ENCODE measurements at regions of chr6 and their contacts with region 1.

Region 1: DNA sequence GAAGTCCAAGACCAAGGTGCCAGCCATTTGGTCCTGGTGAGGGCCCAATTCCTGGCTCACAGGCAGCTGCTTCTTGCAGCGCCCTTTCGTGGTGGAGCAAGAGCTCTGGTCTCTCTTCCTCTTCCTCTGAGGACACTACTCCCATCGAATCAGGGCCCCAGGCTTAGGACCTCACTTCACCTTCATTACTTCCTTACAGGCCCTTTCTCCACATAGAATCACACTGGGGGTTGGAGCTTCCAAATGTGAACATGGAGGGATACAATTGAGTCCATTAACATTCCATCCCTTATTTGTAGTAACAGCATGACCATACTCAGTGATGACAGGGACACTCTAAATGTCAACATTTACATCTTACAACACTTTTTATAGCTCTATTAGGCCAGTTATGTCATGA is 2.3 kb downstream of the RAMACL start:
- DNase-seq: no peak
- ATAC-seq: no peak
- H3K4me3 ChIP-seq: no peak overlapping the region
- H3K27ac ChIP-seq: no peak overlapping the region
- H3K4me1 ChIP-seq: no peaks in the 10 kb centered on the region
- H3K27me3 ChIP-seq: peaks cover 6 to 28% of the 10 kb centered on the region in 2 experiments; a peak in 2 of 5 replicates
- CTCF ChIP-seq: no peak
- EP300 ChIP-seq: no peak
- POLR2A ChIP-seq: no peak
- RAD21 ChIP-seq: no peak

Region 2: GRCh38 chr6:166365221-166365620 is 218.9 kb before region 1 on chr6:
- CTCF ChIA-PET with region 1: no interaction called
- POLR2A ChIA-PET with region 1: no interaction called
- in situ Hi-C with region 1: no loop called
- intact Hi-C with region 1: no loop called
- DNase-seq: no peak
- ATAC-seq: no peak
- H3K4me3 ChIP-seq: no peak overlapping the region
- H3K27ac ChIP-seq: no peak overlapping the region
- H3K4me1 ChIP-seq: no peaks in the 10 kb centered on the region; a peak in 1 of 5 replicates
- H3K27me3 ChIP-seq: no peaks in the 10 kb centered on the region
- CTCF ChIP-seq: no peak
- EP300 ChIP-seq: no peak
- POLR2A ChIP-seq: no peak
- RAD21 ChIP-seq: no peak

Region 3: GRCh38 chr6:166572370-166573261 is 11.5 kb before region 1 on chr6:
- CTCF ChIA-PET with region 1: no interaction called
- POLR2A ChIA-PET with region 1: interaction called, 11 read pairs
- in situ Hi-C with region 1: no loop called
- intact Hi-C with region 1: no loop called
- DNase-seq: no peak
- ATAC-seq: peak; percentile 27; the same call in 2 of the 3 replicates
- H3K4me3 ChIP-seq: no peak overlapping the region
- H3K27ac ChIP-seq: no peak overlapping the region
- H3K4me1 ChIP-seq: no peaks in the 10 kb centered on the region
- H3K27me3 ChIP-seq: peaks cover 24 to 51% of the 10 kb centered on the region in 2 experiments
- CTCF ChIP-seq: no peak
- EP300 ChIP-seq: no peak
- POLR2A ChIP-seq: no peak
- RAD21 ChIP-seq: no peak

Measured in K562 (cell line).